ENCODE measurements at regions of chr3 and their contacts with region 1.

Region 1: DNA sequence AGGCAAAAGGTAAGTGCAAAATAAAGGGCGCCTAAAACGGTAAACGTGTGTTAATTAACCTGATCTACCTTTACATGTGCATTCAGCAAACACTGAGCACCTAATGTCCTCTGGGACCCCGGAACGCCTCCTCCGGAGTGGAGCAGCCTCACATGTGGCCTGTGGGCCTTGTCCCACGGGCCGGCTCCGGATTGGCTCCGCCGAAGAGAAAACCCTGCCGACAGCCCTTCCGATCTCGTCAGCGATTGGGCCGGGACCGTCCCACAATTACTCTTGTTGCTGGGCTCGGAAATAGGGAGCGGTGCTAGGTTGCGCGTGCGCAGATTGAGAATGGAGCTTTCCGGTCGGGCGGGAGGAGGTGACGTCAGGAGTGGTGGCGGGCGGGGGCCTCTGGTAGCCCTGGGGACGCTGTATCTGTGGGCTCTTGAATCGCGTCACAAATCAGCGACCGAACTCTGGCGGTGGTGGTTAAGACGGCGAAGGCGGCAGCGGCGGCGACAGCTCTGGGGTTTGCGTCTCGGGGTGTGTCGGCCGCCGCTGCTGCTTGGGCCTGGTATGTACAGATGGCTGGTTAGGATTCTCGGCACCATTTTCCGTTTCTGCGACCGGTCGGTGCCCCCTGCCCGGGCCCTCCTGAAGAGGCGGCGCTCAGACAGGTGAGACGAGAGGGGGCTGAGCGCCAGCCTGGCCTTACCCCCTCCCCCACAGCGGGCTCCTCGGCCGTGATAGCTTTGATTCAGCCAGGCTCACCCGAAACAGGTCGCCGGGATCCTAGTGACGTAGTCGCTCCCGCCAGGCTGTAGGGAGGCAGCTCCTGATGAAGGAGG is at the start of gene SENP2:
- DNase-seq: peak; percentile 98 to 100 (median 99)
- ATAC-seq: peak; percentile 90
- H3K4me3 ChIP-seq: peak within 1 kb of the TSS; percentile 98
- H3K4me3 Mint-ChIP-seq: peak within 1 kb of the TSS; percentile 87
- H3K27ac ChIP-seq: peak within 1 kb of the TSS; percentile 91 to 98
- H3K27ac Mint-ChIP-seq: peak within 1 kb of the TSS; percentile 85
- H3K4me1 ChIP-seq: peaks cover 30% of the 10 kb centered on the region
- H3K4me1 Mint-ChIP-seq: peaks cover 28% of the 10 kb centered on the region
- H3K27me3 ChIP-seq: no peaks in the 10 kb centered on the region
- H3K27me3 Mint-ChIP-seq: no peaks in the 10 kb centered on the region
- CTCF ChIP-seq: no peak
- total RNA-seq, gene SENP2: 61.1 to 61.2 TPM

Region 2: GRCh38 chr3:184017672-184018423 is 1568.2 kb before region 1 on chr3 and contains the start of gene ABCC5:
- CTCF ChIA-PET with region 1: no interaction called
- POLR2A ChIA-PET with region 1: no interaction called
- intact Hi-C with region 1: loop called in 1 of 2 experiments (anchors 10 kb)
- DNase-seq: peak; percentile 65 to 92 (median 78)
- ATAC-seq: peak; percentile 94
- H3K4me3 ChIP-seq: peak within 1 kb of the TSS; percentile 96
- H3K4me3 Mint-ChIP-seq: peak within 1 kb of the TSS; percentile 100
- H3K27ac ChIP-seq: peak within 1 kb of the TSS; percentile 23 to 43
- H3K27ac Mint-ChIP-seq: peak within 1 kb of the TSS; percentile 66
- H3K4me1 ChIP-seq: peaks cover 16% of the 10 kb centered on the region
- H3K4me1 Mint-ChIP-seq: peaks cover 26% of the 10 kb centered on the region
- H3K27me3 ChIP-seq: peaks cover 0 to 3% of the 10 kb centered on the region in 2 experiments
- H3K27me3 Mint-ChIP-seq: peaks cover 5% of the 10 kb centered on the region
- CTCF ChIP-seq: peak; percentile 89
- total RNA-seq, gene ABCC5: 10.8 to 11.4 TPM

Region 3: DNA sequence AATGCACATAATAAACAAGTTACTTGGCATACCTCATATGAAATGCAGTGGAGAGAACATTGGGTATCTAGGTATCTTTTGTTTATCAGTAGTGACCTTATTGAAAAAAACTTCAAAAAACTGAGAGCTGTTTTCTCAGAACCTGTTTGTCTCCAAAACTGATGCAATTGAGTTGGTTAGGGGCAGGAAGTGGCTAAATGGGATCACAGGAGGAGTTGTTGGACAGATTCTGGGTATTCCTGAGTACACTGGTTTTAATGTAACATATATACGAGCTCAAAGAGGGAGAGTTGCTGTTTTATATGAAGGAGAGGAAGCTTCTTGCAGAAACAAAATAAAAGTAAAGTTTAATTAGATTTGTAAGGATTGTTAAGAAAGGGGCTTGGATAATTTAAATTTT is 592.7 kb before region 1 on chr3:
- CTCF ChIA-PET with region 1: no interaction called
- POLR2A ChIA-PET with region 1: no interaction called
- intact Hi-C with region 1: no loop called
- DNase-seq: no peak
- ATAC-seq: no peak
- H3K4me3 ChIP-seq: no peak overlapping the region
- H3K4me3 Mint-ChIP-seq: no peak overlapping the region
- H3K27ac ChIP-seq: no peak overlapping the region
- H3K27ac Mint-ChIP-seq: no peak overlapping the region
- H3K4me1 ChIP-seq: no peaks in the 10 kb centered on the region
- H3K4me1 Mint-ChIP-seq: no peaks in the 10 kb centered on the region
- H3K27me3 ChIP-seq: no peaks in the 10 kb centered on the region
- H3K27me3 Mint-ChIP-seq: no peaks in the 10 kb centered on the region
- CTCF ChIP-seq: no peak

Region 4: DNA sequence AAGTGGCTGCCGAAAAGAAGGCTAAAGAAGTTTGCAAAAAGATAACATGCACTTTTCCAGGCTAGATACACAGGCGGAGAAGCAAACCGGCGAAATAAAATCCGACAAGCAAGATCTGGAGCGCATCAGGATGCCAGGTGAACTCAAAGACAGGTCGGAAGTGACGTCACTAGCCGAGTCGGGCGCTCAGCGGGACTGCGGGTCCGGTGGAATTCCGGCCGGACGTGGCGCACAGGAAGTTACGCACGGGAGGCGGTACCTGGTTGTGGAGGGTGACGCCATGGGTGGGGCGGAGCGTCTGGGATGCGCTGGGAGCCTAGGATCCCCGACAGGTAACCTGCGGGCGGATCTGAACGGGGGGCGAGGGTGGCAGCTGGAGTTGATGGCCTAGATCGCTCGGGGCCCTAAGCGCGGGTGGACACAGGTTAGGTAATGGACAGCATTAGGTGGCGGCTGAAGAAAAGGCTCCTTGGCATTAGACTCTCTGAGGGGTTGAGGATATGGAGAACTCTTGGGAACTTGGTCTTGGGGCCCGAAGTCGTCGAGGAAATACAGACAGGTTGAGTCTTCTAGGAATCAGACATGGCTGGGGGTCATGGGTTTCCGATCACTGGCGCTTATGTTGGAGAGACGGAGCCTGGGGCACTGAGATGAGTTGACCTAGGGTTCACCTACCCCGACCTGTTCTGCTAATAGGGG is 303.2 kb before region 1 on chr3:
- CTCF ChIA-PET with region 1: interaction called, 3 read pairs
- POLR2A ChIA-PET with region 1: no interaction called
- intact Hi-C with region 1: loop called (anchors 2 to 10 kb)
- DNase-seq: peak; percentile 83 to 97 (median 91)
- ATAC-seq: peak; percentile 99
- H3K4me3 ChIP-seq: peak overlapping the region; percentile 77
- H3K4me3 Mint-ChIP-seq: peak overlapping the region; percentile 92
- H3K27ac ChIP-seq: peak overlapping the region in 1 of 2 donors; percentile 65
- H3K27ac Mint-ChIP-seq: peak overlapping the region; percentile 84
- H3K4me1 ChIP-seq: peaks cover 14% of the 10 kb centered on the region
- H3K4me1 Mint-ChIP-seq: peaks cover 18% of the 10 kb centered on the region
- H3K27me3 ChIP-seq: peaks cover 3 to 10% of the 10 kb centered on the region in 2 experiments
- H3K27me3 Mint-ChIP-seq: peaks cover 26% of the 10 kb centered on the region
- CTCF ChIP-seq: no peak

Region 5: GRCh38 chr3:185558395-185558794 is 27.7 kb before region 1 on chr3:
- CTCF ChIA-PET with region 1: interaction called, 9 read pairs
- POLR2A ChIA-PET with region 1: interaction called, 15 read pairs
- intact Hi-C with region 1: no loop called
- DNase-seq: no peak
- ATAC-seq: no peak
- H3K4me3 ChIP-seq: no peak overlapping the region
- H3K4me3 Mint-ChIP-seq: no peak overlapping the region
- H3K27ac ChIP-seq: no peak overlapping the region
- H3K27ac Mint-ChIP-seq: no peak overlapping the region
- H3K4me1 ChIP-seq: peaks cover 16% of the 10 kb centered on the region
- H3K4me1 Mint-ChIP-seq: peaks cover 22% of the 10 kb centered on the region
- H3K27me3 ChIP-seq: peaks cover 0 to 6% of the 10 kb centered on the region in 2 experiments
- H3K27me3 Mint-ChIP-seq: peaks cover 6% of the 10 kb centered on the region
- CTCF ChIP-seq: no peak

Region 6: DNA sequence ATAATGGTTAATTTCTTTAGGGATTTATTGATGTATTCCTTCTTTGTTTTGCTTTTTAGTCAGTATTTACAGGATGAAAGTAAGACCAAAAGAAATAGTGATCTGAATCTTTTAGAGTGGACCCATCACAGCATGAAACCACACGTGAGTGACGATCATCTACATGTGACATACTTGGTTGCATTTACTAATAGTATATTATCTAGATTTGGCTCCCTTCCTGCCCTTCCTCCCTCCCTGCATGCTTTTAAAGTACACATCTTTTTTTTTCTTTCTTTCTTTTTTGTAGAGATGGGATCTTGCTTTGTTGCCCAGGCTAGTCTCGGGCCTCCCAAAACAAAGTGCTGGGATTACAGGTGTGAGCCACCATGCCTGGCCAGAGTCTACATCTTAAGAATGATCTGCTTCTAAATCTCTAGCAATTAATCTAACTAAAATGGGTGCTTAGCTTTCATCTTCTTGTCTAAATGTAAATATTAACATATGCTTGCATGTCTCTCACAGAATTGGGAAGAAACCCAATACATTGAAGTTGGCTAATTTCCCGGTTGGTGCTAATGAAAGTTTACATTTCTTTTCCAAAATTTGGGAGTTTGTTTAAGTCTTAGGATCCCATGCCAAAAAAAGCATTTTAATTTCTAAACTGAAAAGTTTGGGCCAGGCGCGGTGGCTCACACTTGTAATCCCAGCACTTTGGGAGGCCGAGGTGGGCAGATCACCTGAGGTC is 38.0 kb after region 1 on chr3:
- CTCF ChIA-PET with region 1: no interaction called
- POLR2A ChIA-PET with region 1: no interaction called
- intact Hi-C with region 1: no loop called
- DNase-seq: no peak
- ATAC-seq: no peak
- H3K4me3 ChIP-seq: no peak overlapping the region
- H3K4me3 Mint-ChIP-seq: no peak overlapping the region
- H3K27ac ChIP-seq: no peak overlapping the region
- H3K27ac Mint-ChIP-seq: no peak overlapping the region
- H3K4me1 ChIP-seq: no peaks in the 10 kb centered on the region
- H3K4me1 Mint-ChIP-seq: no peaks in the 10 kb centered on the region
- H3K27me3 ChIP-seq: no peaks in the 10 kb centered on the region
- H3K27me3 Mint-ChIP-seq: no peaks in the 10 kb centered on the region
- CTCF ChIP-seq: no peak

Region 7: DNA sequence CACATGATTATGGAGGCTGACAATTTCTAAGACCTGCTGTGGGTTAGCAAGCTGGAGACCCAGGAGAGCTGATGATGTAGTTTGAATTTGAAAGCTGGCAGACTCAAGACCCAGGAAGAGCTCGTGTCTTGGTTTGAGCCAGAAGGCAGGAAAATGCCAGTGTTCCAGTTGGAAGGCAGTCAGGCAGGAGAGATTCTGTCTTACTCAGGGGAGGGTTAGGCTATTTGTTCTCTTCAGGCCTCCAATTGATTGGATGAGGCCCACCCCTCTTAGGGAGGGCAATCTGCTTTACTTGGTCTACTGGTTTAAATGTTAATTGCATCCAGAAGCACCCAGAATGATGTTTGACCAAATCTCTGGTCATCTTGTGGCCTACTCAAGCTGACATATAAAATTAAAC is 279.2 kb after region 1 on chr3:
- CTCF ChIA-PET with region 1: no interaction called
- POLR2A ChIA-PET with region 1: no interaction called
- intact Hi-C with region 1: no loop called
- DNase-seq: no peak
- ATAC-seq: no peak
- H3K4me3 ChIP-seq: no peak overlapping the region
- H3K4me3 Mint-ChIP-seq: no peak overlapping the region
- H3K27ac ChIP-seq: no peak overlapping the region
- H3K27ac Mint-ChIP-seq: no peak overlapping the region
- H3K4me1 ChIP-seq: no peaks in the 10 kb centered on the region
- H3K4me1 Mint-ChIP-seq: no peaks in the 10 kb centered on the region
- H3K27me3 ChIP-seq: no peaks in the 10 kb centered on the region
- H3K27me3 Mint-ChIP-seq: peaks cover 8% of the 10 kb centered on the region
- CTCF ChIP-seq: no peak

Region 8: DNA sequence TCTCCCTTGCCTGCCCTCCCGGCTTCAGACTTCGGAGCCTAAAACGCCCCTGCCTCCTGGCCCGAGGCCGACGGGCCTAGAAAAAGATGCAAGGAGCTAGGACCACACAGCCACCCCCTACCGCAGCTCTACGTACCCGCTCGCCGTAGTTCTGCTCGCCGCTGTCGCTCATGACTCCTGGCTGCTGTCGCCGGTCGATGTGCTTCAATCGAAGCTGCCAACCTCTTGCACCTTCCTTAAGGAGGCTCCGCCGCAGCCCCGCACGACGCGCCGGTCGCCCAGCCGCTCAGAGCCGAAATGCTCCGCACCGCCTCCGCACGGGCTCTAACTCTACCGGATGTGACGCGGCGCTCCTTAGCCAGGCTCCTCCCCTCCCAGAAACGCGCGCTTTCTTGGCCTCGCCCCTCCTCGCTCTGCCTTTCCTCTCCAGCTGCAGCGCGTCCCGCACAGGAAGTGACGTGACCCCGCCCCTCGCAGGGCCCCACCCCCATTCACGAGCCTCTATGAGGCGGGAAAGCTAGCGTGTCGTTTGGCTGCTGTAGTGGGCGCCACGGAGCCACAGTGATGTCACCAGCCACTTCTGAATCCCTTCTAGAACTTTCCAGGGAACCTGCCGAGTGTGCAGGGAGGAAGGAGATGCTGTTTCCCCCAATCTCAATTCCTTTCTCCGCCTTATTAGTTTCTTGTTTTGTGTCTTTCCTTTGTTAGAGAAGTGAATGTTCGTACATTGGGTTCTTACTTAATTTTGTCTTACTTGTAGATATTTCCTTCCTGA is 351.8 kb after region 1 on chr3 and contains the start of gene TRA2B:
- CTCF ChIA-PET with region 1: no interaction called
- POLR2A ChIA-PET with region 1: interaction called, 18 read pairs
- intact Hi-C with region 1: loop called in 1 of 2 experiments (anchors 5 kb)
- DNase-seq: peak; percentile 97 to 99 (median 98)
- ATAC-seq: peak; percentile 88
- H3K4me3 ChIP-seq: peak within 1 kb of the TSS; percentile 96
- H3K4me3 Mint-ChIP-seq: peak within 1 kb of the TSS; percentile 97
- H3K27ac ChIP-seq: peak within 1 kb of the TSS; percentile 100
- H3K27ac Mint-ChIP-seq: peak within 1 kb of the TSS; percentile 98
- H3K4me1 ChIP-seq: peaks cover 7% of the 10 kb centered on the region
- H3K4me1 Mint-ChIP-seq: peaks cover 54% of the 10 kb centered on the region
- H3K27me3 ChIP-seq: no peaks in the 10 kb centered on the region
- H3K27me3 Mint-ChIP-seq: no peaks in the 10 kb centered on the region
- CTCF ChIP-seq: no peak
- total RNA-seq, gene TRA2B: 549 to 585 TPM

Region 9: DNA sequence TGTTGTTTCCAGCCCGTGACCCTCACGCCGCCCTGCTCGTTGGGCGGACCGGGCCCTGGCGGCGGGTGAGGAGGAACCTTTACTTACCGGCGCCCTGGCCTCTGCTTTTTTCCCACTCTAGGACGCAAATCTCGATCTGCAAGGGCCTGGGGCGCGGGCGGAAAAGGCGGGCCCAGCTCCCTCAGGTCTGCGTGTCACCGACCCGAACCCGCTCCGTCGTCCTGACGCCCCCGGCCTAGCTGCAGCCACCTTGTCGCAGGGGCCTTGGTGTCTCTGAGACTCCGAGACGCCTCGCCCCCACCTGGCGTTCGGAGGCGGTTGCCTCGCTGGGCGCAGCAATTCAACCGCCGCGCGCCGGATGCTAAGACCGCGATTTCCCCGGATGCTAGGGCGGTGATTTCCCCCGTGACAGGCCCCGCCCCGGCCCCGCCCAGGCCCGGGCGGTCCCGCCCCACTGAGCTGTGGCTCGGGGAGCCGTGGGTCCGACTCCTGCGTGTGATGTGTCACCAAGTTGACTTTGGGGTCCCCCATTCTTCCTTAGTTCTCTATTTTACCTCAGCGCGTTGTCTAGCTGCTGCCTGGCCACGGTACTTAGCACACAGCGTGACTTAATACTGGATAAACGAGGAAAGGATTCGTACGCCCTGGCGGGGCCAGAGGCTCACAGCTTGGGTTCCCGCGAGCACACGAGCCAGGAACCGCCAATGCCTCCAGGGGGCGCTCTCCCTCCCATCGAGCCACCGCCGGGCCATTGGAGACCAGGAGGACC is 1553.2 kb after region 1 on chr3 and contains the start of gene RPL39L:
- CTCF ChIA-PET with region 1: no interaction called
- POLR2A ChIA-PET with region 1: no interaction called
- intact Hi-C with region 1: loop called in 1 of 2 experiments (anchors 10 kb)
- DNase-seq: peak; percentile 85 to 97 (median 90)
- ATAC-seq: peak; percentile 95
- H3K4me3 ChIP-seq: peak within 1 kb of the TSS; percentile 69
- H3K4me3 Mint-ChIP-seq: peak within 1 kb of the TSS; percentile 90
- H3K27ac ChIP-seq: peak within 1 kb of the TSS; percentile 81 to 85
- H3K27ac Mint-ChIP-seq: peak within 1 kb of the TSS; percentile 93
- H3K4me1 ChIP-seq: peaks cover 16% of the 10 kb centered on the region
- H3K4me1 Mint-ChIP-seq: peaks cover 16% of the 10 kb centered on the region
- H3K27me3 ChIP-seq: no peaks in the 10 kb centered on the region
- H3K27me3 Mint-ChIP-seq: no peaks in the 10 kb centered on the region
- CTCF ChIP-seq: peak; percentile 97
- total RNA-seq, gene RPL39L: 1.1 to 1.7 TPM